Activated CD4-positive, alpha-beta memory T cell treated with anti-CD3 and anti-CD28 coated beads, Interleukin-2, amount 10 ng/mL, durations not matched to agents 7 days and 5 days (primary cell): ENCODE measurements at regions of chr5 and their contacts with region 1.

Region 1: DNA sequence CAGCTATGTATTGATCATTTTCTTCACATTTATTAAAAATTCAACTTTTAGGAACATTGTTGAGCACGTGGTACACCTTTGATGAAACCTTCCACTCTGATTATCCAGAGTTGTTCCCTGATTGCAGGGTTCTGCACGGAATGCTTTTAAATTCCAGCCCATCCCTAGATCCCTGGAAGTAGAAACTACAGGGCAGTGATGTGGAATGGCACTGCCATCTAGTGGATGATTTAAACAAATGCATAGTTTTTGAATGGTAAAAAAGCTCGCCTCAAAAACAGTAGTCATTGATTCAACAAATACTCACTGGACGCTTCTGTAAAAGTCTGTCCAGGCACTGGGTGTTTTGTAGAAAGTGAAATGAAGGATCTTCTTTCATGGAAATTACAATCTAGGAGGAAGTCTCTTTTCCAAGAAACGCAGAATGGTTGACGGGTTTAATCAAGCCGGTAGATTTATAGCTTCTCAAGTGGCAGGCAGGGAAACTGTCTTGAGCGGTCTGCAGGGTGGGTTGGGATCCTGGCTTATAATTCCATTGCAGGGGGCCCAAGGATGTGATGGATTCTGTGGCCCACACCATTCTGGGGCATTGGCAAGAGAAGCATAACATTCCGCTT is 118.4 kb downstream of the ARHGAP26 start:
- DNase-seq: no peak
- H3K4me3 Mint-ChIP-seq: no peak overlapping the region
- H3K27ac Mint-ChIP-seq: no peak overlapping the region
- H3K4me1 Mint-ChIP-seq: peaks cover 12% of the 10 kb centered on the region
- H3K27me3 Mint-ChIP-seq: no peaks in the 10 kb centered on the region

Region 2: GRCh38 chr5:142837406-142837746 is 51.2 kb before region 1 on chr5:
- CTCF ChIA-PET with region 1: no interaction called
- POLR2A ChIA-PET with region 1: no interaction called
- DNase-seq: no peak
- H3K4me3 Mint-ChIP-seq: no peak overlapping the region
- H3K27ac Mint-ChIP-seq: no peak overlapping the region
- H3K4me1 Mint-ChIP-seq: peaks cover 2% of the 10 kb centered on the region
- H3K27me3 Mint-ChIP-seq: no peaks in the 10 kb centered on the region

Region 3: GRCh38 chr5:142874537-142874936 is 14.0 kb before region 1 on chr5:
- CTCF ChIA-PET with region 1: interaction called, 29 read pairs
- POLR2A ChIA-PET with region 1: interaction called, 3 read pairs
- DNase-seq: no peak
- H3K4me3 Mint-ChIP-seq: no peak overlapping the region
- H3K27ac Mint-ChIP-seq: no peak overlapping the region
- H3K4me1 Mint-ChIP-seq: no peaks in the 10 kb centered on the region
- H3K27me3 Mint-ChIP-seq: no peaks in the 10 kb centered on the region